Activated CD8-positive, alpha-beta memory T cell treated with anti-CD3 and anti-CD28 coated beads, Interleukin-2, amount 10 ng/mL, durations not matched to agents 7 days and 5 days (primary cell): ENCODE measurements at regions of chr10 and their contacts with region 1.

Region 1: DNA sequence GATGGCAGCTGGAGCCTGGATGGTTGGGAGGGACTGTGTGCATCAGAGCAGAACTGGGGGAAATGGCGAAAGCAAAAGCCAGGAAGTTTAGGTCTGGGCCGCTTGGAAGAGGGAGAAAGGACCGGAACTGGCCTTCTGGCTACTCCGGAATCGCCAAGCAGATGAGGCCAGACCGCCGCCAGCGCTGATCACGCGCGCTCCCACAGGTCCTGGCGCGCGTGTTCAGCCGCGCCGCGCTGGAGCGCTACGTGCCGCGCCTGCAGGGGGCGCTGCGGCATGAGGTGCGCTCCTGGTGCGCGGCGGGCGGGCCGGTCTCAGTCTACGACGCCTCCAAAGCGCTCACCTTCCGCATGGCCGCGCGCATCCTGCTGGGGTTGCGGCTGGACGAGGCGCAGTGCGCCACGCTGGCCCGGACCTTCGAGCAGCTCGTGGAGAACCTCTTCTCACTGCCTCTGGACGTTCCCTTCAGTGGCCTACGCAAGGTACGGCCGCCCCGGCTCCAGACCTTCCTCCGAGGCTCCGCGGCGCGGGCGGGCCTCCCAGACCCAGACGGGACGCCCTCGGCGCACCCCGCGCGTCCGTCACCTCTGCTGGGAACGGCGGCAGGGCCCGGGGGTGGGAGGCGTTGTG is 2.0 kb downstream of the CYP26C1 start:
- DNase-seq: peak; percentile 63
- ATAC-seq: peak; percentile 86
- H3K4me3 Mint-ChIP-seq: peak overlapping the region; percentile 64
- H3K27ac Mint-ChIP-seq: no peak overlapping the region
- H3K4me1 Mint-ChIP-seq: peaks cover 22% of the 10 kb centered on the region
- H3K27me3 Mint-ChIP-seq: peaks cover 58% of the 10 kb centered on the region

Region 2: DNA sequence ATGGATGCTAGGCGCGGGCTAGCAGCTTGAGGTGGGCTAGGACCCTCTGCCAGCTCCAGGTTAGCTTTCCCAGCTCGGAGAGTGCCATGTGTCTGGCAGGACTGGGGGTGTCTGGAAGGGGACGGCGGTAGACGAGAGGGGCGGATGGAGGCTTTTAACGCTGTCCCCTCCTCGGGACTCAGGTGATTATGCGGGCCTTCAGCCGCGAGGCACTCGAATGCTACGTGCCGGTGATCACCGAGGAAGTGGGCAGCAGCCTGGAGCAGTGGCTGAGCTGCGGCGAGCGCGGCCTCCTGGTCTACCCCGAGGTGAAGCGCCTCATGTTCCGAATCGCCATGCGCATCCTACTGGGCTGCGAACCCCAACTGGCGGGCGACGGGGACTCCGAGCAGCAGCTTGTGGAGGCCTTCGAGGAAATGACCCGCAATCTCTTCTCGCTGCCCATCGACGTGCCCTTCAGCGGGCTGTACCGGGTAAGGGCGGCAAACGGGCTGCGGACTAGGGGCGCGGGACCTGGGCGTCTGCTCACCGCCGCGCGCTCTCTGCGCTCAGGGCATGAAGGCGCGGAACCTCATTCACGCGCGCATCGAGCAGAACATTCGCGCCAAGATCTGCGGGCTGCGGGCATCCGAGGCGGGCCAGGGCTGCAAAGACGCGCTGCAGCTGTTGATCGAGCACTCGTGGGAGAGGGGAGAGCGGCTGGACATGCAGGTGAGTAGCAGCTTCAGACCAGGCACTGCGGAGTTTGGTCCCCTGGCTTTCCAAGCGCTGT is 12.2 kb after region 1 on chr10:
- CTCF ChIA-PET with region 1: interaction called, 22 read pairs
- DNase-seq: no peak
- ATAC-seq: peak; percentile 18
- H3K4me3 Mint-ChIP-seq: peak overlapping the region; percentile 59
- H3K27ac Mint-ChIP-seq: peak overlapping the region; percentile 43
- H3K4me1 Mint-ChIP-seq: peaks cover 34% of the 10 kb centered on the region
- H3K27me3 Mint-ChIP-seq: peaks cover 87% of the 10 kb centered on the region

Region 3: DNA sequence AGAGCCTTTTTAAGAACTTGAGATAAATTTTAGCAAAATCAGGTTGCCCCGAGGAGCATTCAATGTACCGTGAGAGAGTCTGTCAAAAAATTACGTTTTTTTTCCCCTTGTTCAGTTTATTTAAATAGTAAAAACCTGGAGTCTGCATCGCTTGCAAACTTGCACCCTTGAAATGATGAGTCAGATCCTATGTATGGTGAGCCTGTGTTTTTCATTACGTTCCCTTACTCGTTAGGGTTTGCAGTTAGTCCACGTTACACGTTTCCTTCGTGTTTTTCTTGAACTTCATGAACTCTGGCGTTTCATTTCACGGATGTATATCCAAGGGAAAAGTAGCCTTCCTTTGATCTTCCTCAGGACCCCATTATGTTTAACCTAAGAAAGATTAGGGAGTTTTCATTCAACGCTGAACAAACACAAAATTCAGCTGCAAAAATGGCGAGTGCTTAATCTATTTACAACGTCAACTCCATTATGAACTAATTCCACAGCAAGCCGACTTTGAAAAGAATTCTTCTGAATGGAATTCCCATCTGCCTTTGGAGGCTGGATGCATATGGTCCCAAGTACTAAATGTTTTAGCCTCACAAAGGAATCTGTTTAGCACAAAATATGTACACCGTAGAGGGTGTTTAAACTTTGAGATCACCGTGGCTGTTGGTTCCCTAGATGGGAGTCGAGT is 237.1 kb after region 1 on chr10:
- CTCF ChIA-PET with region 1: no interaction called
- DNase-seq: no peak
- ATAC-seq: no peak
- H3K4me3 Mint-ChIP-seq: no peak overlapping the region
- H3K27ac Mint-ChIP-seq: no peak overlapping the region
- H3K4me1 Mint-ChIP-seq: no peaks in the 10 kb centered on the region
- H3K27me3 Mint-ChIP-seq: peaks cover 13% of the 10 kb centered on the region